A549 (cell line): ENCODE measurements at regions of chr13 and their contacts with region 1.

Region 1: DNA sequence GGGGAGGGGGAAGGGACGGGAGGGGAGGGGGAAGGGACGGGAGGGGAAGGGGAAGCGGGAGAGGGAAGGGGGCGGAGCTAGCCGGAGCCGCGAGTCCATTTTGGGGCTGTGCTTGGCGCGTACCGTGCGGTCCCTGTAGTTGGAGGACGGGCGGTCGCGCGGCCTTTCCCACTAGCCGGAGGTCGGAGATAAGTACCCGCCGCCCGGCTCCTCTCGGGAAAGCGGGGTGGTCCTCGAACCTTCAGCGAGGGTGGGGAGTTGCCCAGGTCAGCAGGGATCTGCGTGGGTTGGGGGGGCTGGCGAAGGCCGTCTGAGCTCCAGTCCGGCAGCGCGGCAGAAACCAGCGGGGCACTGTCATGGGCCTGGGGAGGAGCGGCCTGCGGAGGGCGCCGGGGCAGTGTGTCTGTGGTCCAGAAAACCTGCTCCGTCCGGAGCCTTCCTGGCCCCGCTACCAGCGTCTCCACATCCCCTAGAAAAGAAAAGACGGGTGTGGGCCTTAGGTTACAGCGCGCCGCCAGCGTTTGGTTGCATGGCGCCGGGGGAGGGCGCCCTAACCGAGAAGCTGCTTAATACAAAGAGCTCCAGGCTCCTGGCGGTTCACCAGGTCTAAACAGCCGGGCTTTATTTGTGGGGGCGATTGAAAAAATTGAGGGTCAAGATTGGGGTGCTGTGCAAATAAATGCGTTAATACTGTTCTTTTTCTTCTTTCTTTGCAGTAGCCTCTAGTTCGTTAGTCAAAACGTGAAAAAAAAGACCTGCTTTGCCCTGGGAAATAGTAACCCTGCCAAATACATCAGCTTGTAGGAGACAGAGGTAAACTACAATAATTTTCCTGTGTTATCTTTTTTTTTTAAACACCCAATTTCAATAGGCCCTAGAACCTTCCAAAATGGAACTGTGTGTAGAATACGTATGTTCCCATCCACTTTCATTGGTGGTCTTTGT is at the start of gene TRIM13:
- DNase-seq: peak; percentile 49 to 87
- ATAC-seq: peak; percentile 91 to 92
- H3K4me3 ChIP-seq: peak within 1 kb of the TSS; percentile 76
- H3K27ac ChIP-seq: peak within 1 kb of the TSS; percentile 99 to 100
- H3K4me1 ChIP-seq: peaks cover 24% of the 10 kb centered on the region
- CTCF ChIP-seq: peak; percentile 65
- EP300 ChIP-seq: no peak; a peak in 1 of 5 replicates
- POLR2A ChIP-seq: no peak; the same call in 1 of the 2 replicates
- RAD21 ChIP-seq: peak; percentile 41 to 49; a peak in 2 of 5 replicates
- polyA plus RNA-seq, gene TRIM13: 22.4 and 23.0 TPM in 2 replicates

Region 2: GRCh38 chr13:50015258-50015657 is 18.0 kb after region 1 on chr13 and contains the start of gene KCNRG:
- CTCF ChIA-PET with region 1: interaction called, 14 read pairs
- POLR2A ChIA-PET with region 1: interaction called, 10 read pairs
- DNase-seq: no peak
- ATAC-seq: no peak
- H3K4me3 ChIP-seq: no peak within 1 kb of the TSS
- H3K27ac ChIP-seq: no peak within 1 kb of the TSS
- H3K4me1 ChIP-seq: no peaks in the 10 kb centered on the region
- CTCF ChIP-seq: no peak
- EP300 ChIP-seq: no peak
- POLR2A ChIP-seq: no peak
- RAD21 ChIP-seq: no peak
- polyA plus RNA-seq, gene KCNRG: 1.4 and 1.5 TPM in 2 replicates

Region 3: DNA sequence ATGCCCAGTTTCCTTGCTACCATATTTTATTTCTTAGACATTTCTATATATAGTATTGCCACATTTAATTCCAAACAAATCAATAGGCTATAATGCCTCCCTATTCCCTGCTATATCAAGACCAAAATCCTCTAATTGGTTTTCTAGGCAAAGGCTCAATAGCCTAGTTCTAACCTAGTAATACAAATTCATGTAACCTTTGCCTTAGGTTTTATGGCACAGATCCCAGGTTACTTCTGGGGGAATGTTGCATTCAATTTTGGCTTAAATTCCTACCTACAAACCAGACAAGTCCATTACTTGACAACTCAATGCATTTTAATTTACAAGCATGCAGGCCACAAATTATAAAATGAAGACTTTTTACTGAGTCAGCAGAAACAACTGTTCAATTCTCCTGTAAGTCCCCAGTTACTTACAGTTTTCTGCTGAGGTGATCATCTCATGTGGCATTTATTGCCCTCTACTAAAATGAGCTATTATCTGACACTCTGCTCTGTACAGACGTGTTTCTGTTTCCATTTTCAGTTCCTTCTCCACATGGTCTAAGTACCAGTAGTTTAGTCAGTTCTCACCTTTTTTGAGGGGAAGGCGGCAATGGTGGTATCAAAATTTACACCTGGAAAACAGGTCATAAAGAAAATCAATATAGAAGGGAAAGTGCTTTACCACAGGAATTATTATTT is 29.7 kb after region 1 on chr13:
- CTCF ChIA-PET with region 1: interaction called, 14 read pairs
- POLR2A ChIA-PET with region 1: interaction called, 6 read pairs
- DNase-seq: no peak
- ATAC-seq: no peak
- H3K4me3 ChIP-seq: no peak overlapping the region
- H3K27ac ChIP-seq: no peak overlapping the region
- H3K4me1 ChIP-seq: peaks cover 8% of the 10 kb centered on the region; the same call in 2 of the 3 replicates
- CTCF ChIP-seq: no peak
- EP300 ChIP-seq: no peak
- POLR2A ChIP-seq: no peak
- RAD21 ChIP-seq: no peak

Region 4: DNA sequence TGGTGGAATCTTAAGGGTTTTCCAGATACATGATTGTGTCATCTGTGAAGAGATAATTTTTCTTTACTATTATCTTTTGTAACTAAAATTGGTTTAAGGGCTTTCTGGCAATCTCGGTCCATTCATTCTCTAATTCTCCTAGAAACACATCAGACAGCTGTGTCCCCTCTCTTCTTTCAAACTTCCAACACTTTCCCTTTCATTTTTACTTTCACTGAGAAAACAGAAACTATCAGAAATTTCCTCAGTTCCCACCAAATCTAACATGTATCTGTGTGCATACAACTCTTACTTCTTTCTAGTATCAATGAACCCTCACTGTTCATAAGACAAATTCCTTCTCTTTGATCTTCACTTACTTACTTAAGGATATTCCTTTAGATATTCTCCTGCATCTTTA is 58.2 kb after region 1 on chr13:
- CTCF ChIA-PET with region 1: no interaction called
- POLR2A ChIA-PET with region 1: no interaction called
- DNase-seq: no peak
- ATAC-seq: no peak
- H3K4me3 ChIP-seq: no peak overlapping the region
- H3K27ac ChIP-seq: no peak overlapping the region
- H3K4me1 ChIP-seq: no peaks in the 10 kb centered on the region
- CTCF ChIP-seq: no peak
- EP300 ChIP-seq: no peak
- POLR2A ChIP-seq: no peak
- RAD21 ChIP-seq: no peak

Region 5: GRCh38 chr13:50123862-50124536 is 126.8 kb after region 1 on chr13:
- CTCF ChIA-PET with region 1: interaction called, 6 read pairs
- POLR2A ChIA-PET with region 1: interaction called, 16 read pairs
- DNase-seq: peak; percentile 21 to 93
- ATAC-seq: peak; percentile 78 to 84
- H3K4me3 ChIP-seq: peak overlapping the region; percentile 67
- H3K27ac ChIP-seq: peak overlapping the region; percentile 97 to 99
- H3K4me1 ChIP-seq: peaks cover 14% of the 10 kb centered on the region; the same call in 2 of the 3 replicates
- CTCF ChIP-seq: no peak
- EP300 ChIP-seq: no peak
- POLR2A ChIP-seq: peak; percentile 40
- RAD21 ChIP-seq: no peak; a peak in 1 of 5 replicates

Region 6: DNA sequence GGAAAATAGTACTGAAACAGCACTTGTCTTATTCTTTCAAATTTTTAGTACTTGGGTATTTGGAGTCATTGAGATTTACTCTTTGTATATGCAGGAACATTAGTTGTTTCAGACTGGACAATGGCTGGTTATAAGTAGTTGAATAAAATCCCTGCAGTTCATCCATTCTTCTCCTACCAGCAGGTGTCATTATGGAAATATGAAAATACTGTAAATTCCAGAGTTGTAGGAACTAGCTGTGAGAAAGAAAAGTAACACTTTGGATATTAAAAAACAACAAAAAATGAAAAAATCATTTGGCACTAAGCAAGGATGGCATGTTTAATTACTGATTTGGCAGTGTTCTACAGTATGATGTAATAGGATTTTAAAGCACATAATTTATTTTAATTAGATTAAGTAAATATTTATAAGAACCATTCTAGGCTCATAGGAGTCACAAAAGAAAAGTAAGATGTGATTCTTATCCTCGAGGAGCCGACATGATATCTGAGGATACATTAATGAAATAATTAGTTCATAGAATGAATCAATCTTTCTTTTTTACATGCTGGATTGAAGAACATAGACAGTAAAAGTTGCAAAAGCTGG is 173.3 kb after region 1 on chr13:
- CTCF ChIA-PET with region 1: no interaction called
- POLR2A ChIA-PET with region 1: no interaction called
- DNase-seq: peak in 1 of 2 experiments; percentile 23
- ATAC-seq: no peak
- H3K4me3 ChIP-seq: no peak overlapping the region
- H3K27ac ChIP-seq: no peak overlapping the region
- H3K4me1 ChIP-seq: no peaks in the 10 kb centered on the region
- CTCF ChIP-seq: peak; percentile 51
- EP300 ChIP-seq: no peak
- POLR2A ChIP-seq: no peak
- RAD21 ChIP-seq: peak; percentile 65 to 69

Region 7: GRCh38 chr13:50209631-50210030 is 212.4 kb after region 1 on chr13:
- CTCF ChIA-PET with region 1: no interaction called
- POLR2A ChIA-PET with region 1: no interaction called
- DNase-seq: no peak
- ATAC-seq: no peak
- H3K4me3 ChIP-seq: no peak overlapping the region
- H3K27ac ChIP-seq: peak overlapping the region in 1 of 2 experiments; percentile 80; a peak in 2 of 6 replicates
- H3K4me1 ChIP-seq: peaks cover 17% of the 10 kb centered on the region
- CTCF ChIP-seq: no peak
- EP300 ChIP-seq: no peak
- POLR2A ChIP-seq: no peak
- RAD21 ChIP-seq: no peak

Region 8: GRCh38 chr13:50457415-50458393 is 460.5 kb after region 1 on chr13:
- CTCF ChIA-PET with region 1: no interaction called
- POLR2A ChIA-PET with region 1: no interaction called
- DNase-seq: peak in 1 of 2 experiments; percentile 1
- ATAC-seq: no peak
- H3K4me3 ChIP-seq: no peak overlapping the region
- H3K27ac ChIP-seq: no peak overlapping the region
- H3K4me1 ChIP-seq: peaks cover 9% of the 10 kb centered on the region; the same call in 2 of the 3 replicates
- CTCF ChIP-seq: no peak
- EP300 ChIP-seq: no peak
- POLR2A ChIP-seq: no peak
- RAD21 ChIP-seq: no peak